BJ (cell line): ENCODE measurements at regions of chr10 and their contacts with region 1.

Region 1: DNA sequence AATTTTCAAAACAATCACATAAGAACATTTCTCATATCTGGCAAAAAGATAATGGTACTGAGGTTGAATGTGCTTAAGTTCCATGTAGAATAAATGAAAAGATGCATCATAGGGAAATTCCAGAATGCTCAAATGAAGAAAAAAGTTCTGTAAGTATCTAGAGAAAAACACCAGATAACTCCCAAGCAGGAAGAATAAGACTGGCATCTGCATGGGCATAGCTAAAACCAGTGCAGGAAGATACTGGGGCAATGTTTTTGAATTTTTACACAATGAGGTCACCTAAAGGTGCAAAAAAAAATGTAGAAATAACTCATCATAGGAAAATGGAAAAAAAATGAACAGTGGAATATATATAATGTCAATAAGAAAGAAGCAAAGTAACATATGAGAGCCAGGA is 275.2 kb downstream of the BAMBI start:
- DNase-seq: no peak
- H3K4me3 ChIP-seq: no peak overlapping the region
- H3K27me3 ChIP-seq: peaks cover 3% of the 10 kb centered on the region
- CTCF ChIP-seq: no peak

Region 2: DNA sequence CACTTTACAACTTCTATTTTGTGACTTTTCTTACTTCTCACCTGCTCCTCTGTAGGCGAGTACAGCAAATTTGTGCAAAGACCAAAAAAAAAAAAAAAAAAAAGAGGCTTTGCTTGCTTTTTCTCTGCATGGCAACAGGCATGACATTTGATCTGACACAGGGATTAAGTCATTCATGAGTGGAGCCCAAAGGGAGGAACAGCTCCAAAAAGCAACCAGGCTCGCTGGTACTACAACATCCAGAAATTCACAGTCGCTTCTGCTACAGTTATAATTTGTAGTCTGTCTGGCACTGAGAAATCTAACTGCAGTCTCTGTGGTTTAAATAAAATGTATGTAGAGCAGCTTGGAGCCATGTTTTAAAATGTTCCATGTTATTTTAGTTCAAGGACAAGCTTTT is 1238.6 kb before region 1 on chr10:
- CTCF ChIA-PET with region 1: no interaction called
- POLR2A ChIA-PET with region 1: interaction called, 15 read pairs
- DNase-seq: no peak
- H3K4me3 ChIP-seq: no peak overlapping the region
- H3K27me3 ChIP-seq: no peaks in the 10 kb centered on the region
- CTCF ChIP-seq: no peak